ENCODE measurements at regions of chr3 and their contacts with region 1.

Region 1: GRCh38 chr3:149352556-149352955 is 19.1 kb upstream of the TM4SF18 start:
- DNase-seq: peak; percentile 36
- ATAC-seq: peak; percentile 80
- H3K4me3 Mint-ChIP-seq: no peak overlapping the region
- H3K27ac Mint-ChIP-seq: no peak overlapping the region
- H3K4me1 Mint-ChIP-seq: no peaks in the 10 kb centered on the region
- H3K27me3 Mint-ChIP-seq: peaks cover 11% of the 10 kb centered on the region
- CTCF ChIP-seq: peak; percentile 69

Region 2: GRCh38 chr3:149095487-149095886 is 257.1 kb before region 1 on chr3:
- CTCF ChIA-PET with region 1: no interaction called
- POLR2A ChIA-PET with region 1: no interaction called
- intact Hi-C with region 1: no loop called
- DNase-seq: no peak
- ATAC-seq: no peak
- H3K4me3 Mint-ChIP-seq: no peak overlapping the region
- H3K27ac Mint-ChIP-seq: no peak overlapping the region
- H3K4me1 Mint-ChIP-seq: no peaks in the 10 kb centered on the region
- H3K27me3 Mint-ChIP-seq: no peaks in the 10 kb centered on the region
- CTCF ChIP-seq: no peak

Region 3: DNA sequence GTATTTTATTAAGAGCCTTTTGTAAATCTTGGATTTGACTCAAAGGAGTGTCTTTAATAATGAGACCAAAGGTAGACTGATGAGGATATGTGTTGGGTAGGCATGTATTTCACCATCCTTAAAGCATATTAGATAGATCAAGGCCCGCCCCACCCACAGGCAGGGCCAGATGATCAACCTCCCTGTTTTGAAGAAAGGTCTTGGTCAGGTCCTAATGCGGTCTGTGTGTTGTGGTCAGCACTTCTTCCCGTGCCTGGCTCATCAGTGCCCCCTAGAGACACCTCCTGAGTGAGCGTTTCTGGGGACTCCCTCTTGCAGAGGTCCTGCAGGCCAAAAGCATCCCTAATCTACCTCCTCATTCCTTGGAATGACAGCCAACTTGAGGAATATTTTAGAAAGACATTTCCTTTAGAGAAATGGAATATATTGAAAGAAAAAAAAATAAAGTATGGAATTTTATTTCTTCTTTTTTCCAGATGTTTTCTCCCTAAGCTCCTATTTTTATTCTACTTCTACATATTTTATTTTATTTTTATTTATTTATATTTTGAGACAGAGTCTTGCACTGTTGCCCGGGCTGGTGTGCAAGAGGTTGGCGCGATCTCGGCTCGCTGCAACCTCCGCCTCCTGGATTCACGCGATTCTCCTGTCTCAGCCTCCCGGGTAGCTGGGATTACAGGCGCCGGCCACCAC is 127.9 kb after region 1 on chr3:
- CTCF ChIA-PET with region 1: no interaction called
- POLR2A ChIA-PET with region 1: no interaction called
- intact Hi-C with region 1: loop called (anchors 5 kb)
- DNase-seq: peak; percentile 74
- ATAC-seq: peak; percentile 62
- H3K4me3 Mint-ChIP-seq: no peak overlapping the region
- H3K27ac Mint-ChIP-seq: no peak overlapping the region
- H3K4me1 Mint-ChIP-seq: no peaks in the 10 kb centered on the region
- H3K27me3 Mint-ChIP-seq: peaks cover 2% of the 10 kb centered on the region
- CTCF ChIP-seq: peak; percentile 55